ENCODE measurements at regions of chr20 and their contacts with region 1.

Region 1: DNA sequence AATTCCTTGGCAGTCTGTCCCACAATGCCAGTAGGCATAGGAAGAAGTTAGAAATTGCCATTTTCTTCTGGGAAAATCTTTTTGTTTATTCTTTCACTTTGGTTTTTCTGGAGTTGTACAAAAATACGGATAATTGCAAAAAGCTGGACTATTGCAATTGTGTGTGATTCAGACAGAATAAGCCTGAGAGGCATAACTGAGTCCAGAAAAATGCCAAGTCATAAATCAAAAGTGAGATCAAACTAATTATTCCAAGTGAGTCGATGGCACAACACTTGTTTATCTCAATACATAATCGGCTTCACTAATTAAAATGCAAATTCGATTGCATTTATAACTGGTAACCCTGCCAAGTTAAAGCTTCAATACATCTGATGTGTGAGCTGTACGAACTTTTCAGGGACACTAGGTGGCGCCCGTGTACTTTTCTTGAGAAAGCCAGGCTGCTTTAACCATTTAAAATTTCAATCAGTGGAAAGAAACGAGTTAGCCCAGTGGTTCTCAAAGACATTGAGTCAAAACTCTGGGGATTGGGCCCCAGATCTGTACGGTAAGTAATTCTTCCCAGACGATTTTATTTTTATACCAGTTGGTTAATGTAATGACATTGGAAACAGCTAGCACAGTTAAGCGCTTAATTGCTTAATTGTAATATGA is 102.6 kb downstream of the LAMP5 start:
- DNase-seq: peak; percentile 65 to 80
- ATAC-seq: peak; percentile 79 to 87
- H3K4me3 ChIP-seq: peak overlapping the region; percentile 39
- H3K27ac ChIP-seq: peak overlapping the region in 1 of 2 experiments; percentile 71; a peak in 4 of 6 replicates
- H3K4me1 ChIP-seq: no peaks in the 10 kb centered on the region
- CTCF ChIP-seq: peak; percentile 98
- EP300 ChIP-seq: no peak
- POLR2A ChIP-seq: no peak
- RAD21 ChIP-seq: peak; percentile 97

Region 2: GRCh38 chr20:9590189-9590588 is 26.8 kb before region 1 on chr20:
- CTCF ChIA-PET with region 1: interaction called, 14 read pairs
- POLR2A ChIA-PET with region 1: no interaction called
- DNase-seq: peak in 1 of 2 experiments; percentile 69
- ATAC-seq: peak; percentile 63 to 84; a peak in 5 of 6 replicates
- H3K4me3 ChIP-seq: no peak overlapping the region
- H3K27ac ChIP-seq: peak overlapping the region; percentile 61 to 77
- H3K4me1 ChIP-seq: peaks cover 48% of the 10 kb centered on the region
- CTCF ChIP-seq: no peak
- EP300 ChIP-seq: no peak
- POLR2A ChIP-seq: no peak
- RAD21 ChIP-seq: no peak

Region 3: DNA sequence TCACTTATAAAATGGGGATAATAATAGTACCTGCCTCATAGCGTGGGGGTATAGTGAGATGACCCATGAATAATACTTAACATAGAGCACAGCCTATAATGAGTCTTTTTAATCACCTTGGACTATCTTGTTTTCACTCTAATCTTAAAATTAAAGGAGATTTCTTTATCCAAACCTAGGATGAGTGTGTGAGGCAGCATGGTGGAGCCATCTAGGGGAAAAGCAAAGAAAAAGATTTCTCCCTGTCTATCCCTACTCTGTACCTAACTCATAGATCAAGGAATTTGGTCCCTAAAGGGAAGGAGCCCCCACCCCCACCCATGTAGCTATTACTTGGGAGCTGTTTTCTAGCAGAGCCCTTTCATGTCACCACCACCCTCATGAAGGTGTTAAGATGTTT is 267.1 kb after region 1 on chr20:
- CTCF ChIA-PET with region 1: interaction called, 48 read pairs
- POLR2A ChIA-PET with region 1: interaction called, 4 read pairs
- DNase-seq: no peak
- ATAC-seq: peak; percentile 85 to 90; a peak in 5 of 6 replicates
- H3K4me3 ChIP-seq: no peak overlapping the region
- H3K27ac ChIP-seq: no peak overlapping the region
- H3K4me1 ChIP-seq: no peaks in the 10 kb centered on the region
- CTCF ChIP-seq: peak; percentile 43
- EP300 ChIP-seq: no peak
- POLR2A ChIP-seq: no peak
- RAD21 ChIP-seq: peak; percentile 41 to 60

Region 4: GRCh38 chr20:9919271-9920014 is 302.5 kb after region 1 on chr20:
- CTCF ChIA-PET with region 1: interaction called, 66 read pairs
- POLR2A ChIA-PET with region 1: no interaction called
- DNase-seq: no peak
- ATAC-seq: no peak
- H3K4me3 ChIP-seq: no peak overlapping the region
- H3K27ac ChIP-seq: no peak overlapping the region
- H3K4me1 ChIP-seq: no peaks in the 10 kb centered on the region
- CTCF ChIP-seq: no peak
- EP300 ChIP-seq: no peak
- POLR2A ChIP-seq: no peak
- RAD21 ChIP-seq: no peak

Region 5: DNA sequence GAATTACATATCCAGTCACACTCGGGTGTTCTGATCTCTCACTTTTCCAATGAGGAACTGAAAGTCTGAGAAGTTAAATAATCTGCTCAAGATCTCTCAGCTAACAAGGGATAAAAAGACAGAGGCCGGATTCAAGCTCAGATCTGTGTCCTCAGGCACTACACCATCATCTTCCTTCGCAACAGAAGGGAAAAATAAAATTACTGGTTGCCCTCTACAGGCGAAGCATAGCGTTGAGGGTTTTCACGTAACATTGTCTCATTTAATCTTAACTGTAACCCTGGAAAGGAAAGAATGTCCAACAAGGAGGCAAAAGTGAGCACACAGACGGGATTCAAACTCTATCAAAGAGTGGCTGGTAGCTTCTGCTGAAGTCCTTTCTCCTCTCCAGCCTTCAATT is 350.0 kb after region 1 on chr20:
- CTCF ChIA-PET with region 1: interaction called, 92 read pairs
- POLR2A ChIA-PET with region 1: no interaction called
- DNase-seq: peak; percentile 36 to 38
- ATAC-seq: peak; percentile 87 to 96
- H3K4me3 ChIP-seq: no peak overlapping the region
- H3K27ac ChIP-seq: no peak overlapping the region
- H3K4me1 ChIP-seq: no peaks in the 10 kb centered on the region
- CTCF ChIP-seq: peak; percentile 64
- EP300 ChIP-seq: no peak
- POLR2A ChIP-seq: no peak
- RAD21 ChIP-seq: peak; percentile 57 to 64; a peak in 4 of 5 replicates

Region 6: DNA sequence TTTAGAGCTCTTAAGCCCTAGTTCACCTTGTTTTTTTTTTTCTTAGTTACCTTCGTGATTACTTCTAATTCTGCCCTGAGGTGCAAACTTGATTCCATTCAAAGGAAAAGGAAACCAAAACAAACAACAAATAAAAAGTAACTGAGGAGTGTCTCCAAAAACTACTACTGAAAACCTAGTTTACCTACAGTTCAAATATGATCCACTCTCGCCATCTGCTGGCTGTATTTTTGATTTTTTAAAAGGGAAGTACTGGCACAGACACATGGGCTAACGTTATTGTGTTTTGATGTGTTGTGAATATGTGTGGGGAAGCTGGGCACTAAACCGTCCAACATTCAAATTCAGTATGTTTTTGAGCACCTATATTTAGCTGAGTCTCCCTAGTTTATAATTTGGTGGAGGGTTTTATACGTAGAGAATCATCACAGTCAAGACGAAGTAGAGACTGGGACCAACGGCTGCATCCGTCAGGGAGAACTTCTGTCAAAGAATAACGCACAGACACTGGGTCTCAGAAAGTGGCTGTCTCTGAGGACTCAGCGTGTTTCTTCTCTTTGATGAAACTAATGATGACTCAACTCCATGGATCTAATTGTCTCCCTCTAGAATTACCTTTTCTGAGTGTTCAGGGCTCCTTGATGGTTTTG is 1927.2 kb after region 1 on chr20:
- CTCF ChIA-PET with region 1: interaction called, 23 read pairs
- POLR2A ChIA-PET with region 1: no interaction called
- DNase-seq: peak; percentile 55 to 84
- ATAC-seq: peak; percentile 85 to 93
- H3K4me3 ChIP-seq: no peak overlapping the region
- H3K27ac ChIP-seq: peak overlapping the region; percentile 75 to 83
- H3K4me1 ChIP-seq: peaks cover 22% of the 10 kb centered on the region
- CTCF ChIP-seq: peak; percentile 95
- EP300 ChIP-seq: no peak
- POLR2A ChIP-seq: no peak
- RAD21 ChIP-seq: peak; percentile 98

Measured in A549 (cell line).